ENCODE measurements at regions of chr12 and their contacts with region 1.

Region 1: GRCh38 chr12:89862511-89863179 is 154.0 kb upstream of the ATP2B1 start:
- DNase-seq: peak; percentile 57
- H3K4me3 Mint-ChIP-seq: peak overlapping the region; percentile 70
- H3K27ac Mint-ChIP-seq: peak overlapping the region; percentile 92
- H3K4me1 Mint-ChIP-seq: peaks cover 39% of the 10 kb centered on the region
- H3K27me3 Mint-ChIP-seq: no peaks in the 10 kb centered on the region

Region 2: GRCh38 chr12:89470741-89471509 is 391.7 kb before region 1 on chr12:
- CTCF ChIA-PET with region 1: no interaction called
- intact Hi-C with region 1: loop called (anchors 5 kb)
- DNase-seq: no peak
- H3K4me3 Mint-ChIP-seq: no peak overlapping the region
- H3K27ac Mint-ChIP-seq: no peak overlapping the region
- H3K4me1 Mint-ChIP-seq: peaks cover 44% of the 10 kb centered on the region
- H3K27me3 Mint-ChIP-seq: no peaks in the 10 kb centered on the region

Region 3: DNA sequence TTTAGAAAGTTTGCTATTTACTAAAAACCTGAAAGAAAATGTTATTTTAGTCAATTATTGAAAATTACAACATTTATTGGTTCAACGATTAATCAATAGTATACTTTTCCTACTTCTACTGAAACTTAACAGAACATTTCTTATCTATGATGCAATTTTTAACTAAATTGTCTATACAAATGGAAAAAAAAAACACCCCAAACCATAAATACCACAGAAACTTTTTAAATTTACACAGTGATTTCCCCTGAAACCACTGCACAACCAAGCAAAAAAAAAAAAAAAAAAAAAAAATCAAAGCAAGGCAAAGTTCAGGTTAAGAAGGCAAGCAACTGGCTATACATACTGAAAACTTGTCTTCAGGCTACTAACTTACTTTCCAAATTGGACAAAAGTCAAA is 264.9 kb before region 1 on chr12:
- CTCF ChIA-PET with region 1: no interaction called
- intact Hi-C with region 1: loop called (anchors 2 kb)
- DNase-seq: no peak
- H3K4me3 Mint-ChIP-seq: no peak overlapping the region
- H3K27ac Mint-ChIP-seq: peak overlapping the region; percentile 66
- H3K4me1 Mint-ChIP-seq: peaks cover 23% of the 10 kb centered on the region
- H3K27me3 Mint-ChIP-seq: no peaks in the 10 kb centered on the region

Region 4: DNA sequence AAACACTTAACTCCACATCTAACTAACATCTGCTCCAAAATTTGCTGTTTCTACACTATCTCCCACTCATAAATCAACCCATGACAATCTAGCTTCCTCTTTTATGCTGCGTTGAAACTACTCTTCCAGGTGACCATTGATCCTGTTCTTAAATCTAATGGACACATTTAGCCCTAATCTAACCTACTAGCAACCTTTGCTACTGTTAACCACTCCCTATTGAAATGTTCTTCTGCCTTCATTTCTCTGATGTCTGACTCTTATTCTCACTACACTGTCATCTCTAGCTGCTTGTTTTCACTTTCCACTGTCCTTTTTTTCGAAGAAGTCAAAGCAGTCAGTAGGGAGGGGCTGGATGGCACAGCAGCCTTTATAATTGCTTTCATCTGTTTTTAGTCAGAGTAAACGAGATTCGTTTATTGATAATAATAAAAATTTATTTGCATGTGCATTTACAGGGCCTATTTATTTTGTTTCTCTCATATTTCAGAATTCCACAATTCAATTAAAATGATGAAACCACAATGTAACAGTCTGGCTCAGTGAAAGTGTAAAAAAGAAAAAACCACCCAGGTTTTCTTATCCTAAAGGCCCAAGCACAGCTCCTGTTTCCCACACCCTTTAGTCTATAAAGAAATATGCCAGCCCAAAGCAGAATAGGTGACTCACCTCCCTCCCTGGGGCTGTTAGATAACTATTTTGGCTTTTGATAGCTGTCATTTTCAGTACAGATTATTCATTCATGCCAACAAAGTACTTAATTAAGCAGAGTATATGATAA is 198.9 kb before region 1 on chr12:
- CTCF ChIA-PET with region 1: no interaction called
- intact Hi-C with region 1: loop called (anchors 5 kb)
- DNase-seq: peak; percentile 38
- H3K4me3 Mint-ChIP-seq: peak overlapping the region; percentile 16
- H3K27ac Mint-ChIP-seq: peak overlapping the region; percentile 55
- H3K4me1 Mint-ChIP-seq: peaks cover 65% of the 10 kb centered on the region
- H3K27me3 Mint-ChIP-seq: no peaks in the 10 kb centered on the region

Region 5: DNA sequence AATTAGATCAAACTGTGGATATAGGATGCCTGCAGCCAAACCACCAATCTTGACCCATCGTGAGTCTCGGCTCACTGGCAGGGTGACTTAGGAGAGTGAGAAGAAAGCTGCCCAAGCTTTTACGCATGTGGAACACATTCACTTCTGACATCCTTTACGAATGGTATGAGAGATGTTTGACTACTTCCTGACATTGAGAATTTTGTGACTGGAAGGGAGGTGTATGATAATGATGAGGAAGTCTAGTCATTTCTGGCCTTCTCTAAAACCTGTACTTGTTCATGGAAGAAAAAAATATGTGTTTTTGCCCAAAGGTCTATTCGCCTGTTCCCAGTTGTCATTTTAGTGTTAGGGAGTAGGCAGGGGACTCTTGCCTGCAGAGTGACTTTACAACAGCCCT is 73.2 kb after region 1 on chr12:
- CTCF ChIA-PET with region 1: no interaction called
- intact Hi-C with region 1: loop called (anchors 1 kb)
- DNase-seq: no peak
- H3K4me3 Mint-ChIP-seq: no peak overlapping the region
- H3K27ac Mint-ChIP-seq: peak overlapping the region; percentile 53
- H3K4me1 Mint-ChIP-seq: peaks cover 28% of the 10 kb centered on the region
- H3K27me3 Mint-ChIP-seq: no peaks in the 10 kb centered on the region

Region 6: GRCh38 chr12:90042920-90043641 is 180.4 kb after region 1 on chr12:
- CTCF ChIA-PET with region 1: no interaction called
- intact Hi-C with region 1: loop called (anchors 5 kb)
- DNase-seq: no peak
- H3K4me3 Mint-ChIP-seq: no peak overlapping the region
- H3K27ac Mint-ChIP-seq: no peak overlapping the region
- H3K4me1 Mint-ChIP-seq: peaks cover 9% of the 10 kb centered on the region
- H3K27me3 Mint-ChIP-seq: no peaks in the 10 kb centered on the region

Measured in activated naive CD4-positive, alpha-beta T cell treated with anti-CD3 and anti-CD28 coated beads for 36 hours (primary cell).